ENCODE measurements at regions of chr6 and their contacts with region 1.

Region 1: GRCh38 chr6:80610846-80611245 is 504.4 kb downstream of the BCKDHB start:
- DNase-seq: no peak
- H3K4me3 ChIP-seq: no peak overlapping the region
- H3K27ac ChIP-seq: no peak overlapping the region
- H3K4me1 ChIP-seq: peaks cover 0 to 33% (median 18%) of the 10 kb centered on the region in 4 donors
- H3K27me3 ChIP-seq: no peaks in the 10 kb centered on the region
- CTCF ChIP-seq: no peak

Region 2: DNA sequence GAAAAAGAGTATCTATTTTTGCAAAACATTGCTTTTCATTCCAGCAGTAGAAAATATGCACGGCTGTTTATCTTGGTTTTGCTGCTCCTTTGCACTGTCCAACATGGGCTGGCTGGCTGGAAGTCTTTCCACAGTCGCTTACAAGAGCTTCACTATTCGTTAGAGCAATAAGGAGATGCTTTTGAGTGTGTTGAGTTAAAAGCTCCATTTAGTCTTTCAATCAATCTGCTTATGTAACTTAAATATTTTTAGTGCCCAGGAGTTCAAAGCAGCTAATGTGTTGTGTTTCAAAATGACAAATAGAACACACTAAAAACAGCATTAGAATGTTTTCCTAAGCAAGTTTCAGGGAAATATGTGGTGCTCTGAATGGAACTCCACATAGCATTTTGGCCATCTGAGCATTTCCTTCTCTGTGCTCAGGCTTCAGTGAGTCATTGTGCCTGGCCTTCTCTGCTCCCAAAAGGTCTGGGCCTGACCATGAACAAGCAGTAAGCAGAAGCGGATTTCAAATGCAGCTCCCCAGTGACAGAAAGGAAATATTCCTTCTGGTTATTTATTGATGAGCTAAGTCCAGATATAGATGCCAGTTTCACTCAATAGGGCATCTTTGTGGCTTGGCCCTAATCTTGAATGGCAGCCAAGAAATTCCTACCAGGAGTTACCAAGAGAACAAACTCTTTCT is 561.4 kb after region 1 on chr6:
- intact Hi-C with region 1: loop called (anchors 5 kb)
- DNase-seq: peak; percentile 62 to 75
- H3K4me3 ChIP-seq: no peak overlapping the region
- H3K27ac ChIP-seq: peak overlapping the region; percentile 68 to 72
- H3K4me1 ChIP-seq: peaks cover 0 to 49% (median 5%) of the 10 kb centered on the region in 4 donors
- H3K27me3 ChIP-seq: no peaks in the 10 kb centered on the region
- CTCF ChIP-seq: no peak